Naive thymus-derived CD4-positive, alpha-beta T cell (primary cell): ENCODE measurements at regions of chr10 and their contacts with region 1.

Region 1: DNA sequence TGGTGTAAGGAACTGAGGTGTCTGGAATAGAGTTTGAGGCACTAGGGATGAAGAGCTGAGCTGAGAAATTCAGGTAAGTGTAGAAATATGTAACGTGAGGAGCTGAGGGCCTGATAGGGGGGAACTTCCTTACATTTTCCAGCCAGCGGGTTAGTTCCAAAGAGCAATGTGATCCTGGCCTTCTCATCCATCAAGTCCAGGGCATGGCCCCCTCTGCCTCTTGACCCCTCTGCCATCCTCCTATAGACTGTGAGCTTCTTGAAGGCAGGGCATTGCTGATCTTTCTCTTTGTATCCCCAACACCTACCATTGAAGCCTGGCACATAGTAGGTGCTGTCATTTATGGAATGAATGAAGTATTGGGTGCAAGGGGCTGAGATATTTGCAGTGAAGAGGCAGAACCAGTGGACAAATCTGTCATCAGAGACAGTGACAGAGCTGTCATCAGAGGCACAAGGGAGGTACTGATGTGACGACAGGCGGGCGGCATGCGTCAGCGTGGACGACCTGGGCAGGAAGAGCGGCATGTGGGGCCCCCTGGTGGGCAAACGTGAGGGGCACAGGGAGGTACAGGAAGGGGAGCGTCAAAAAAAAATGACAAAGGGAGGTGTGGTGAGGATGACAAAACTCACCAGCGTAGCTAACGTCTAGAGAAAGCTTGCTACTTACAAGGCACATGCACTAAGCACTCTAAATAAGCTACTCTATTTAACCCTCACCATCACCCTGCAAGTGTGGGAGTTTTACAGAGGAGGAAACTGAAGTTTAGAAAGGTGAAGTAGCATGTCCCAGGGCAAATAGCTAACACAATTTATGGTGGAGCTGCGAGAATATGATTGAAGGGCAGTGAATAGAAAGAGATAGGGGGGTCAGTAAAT is 5.2 kb upstream of the CAMK2G start:
- DNase-seq: peak; percentile 91 to 98 (median 96)
- ATAC-seq: peak; percentile 97
- H3K4me3 ChIP-seq: no peak overlapping the region
- H3K4me3 Mint-ChIP-seq: peak overlapping the region in 5 of 10 donors; percentile 0 to 40 (median 1)
- H3K27ac ChIP-seq: peak overlapping the region; percentile 68
- H3K27ac Mint-ChIP-seq: peak overlapping the region; percentile 30 to 98 (median 89)
- H3K4me1 ChIP-seq: peaks cover 18 to 22% of the 10 kb centered on the region in 2 donors
- H3K4me1 Mint-ChIP-seq: peaks cover 14 to 51% (median 41%) of the 10 kb centered on the region in 7 donors
- H3K27me3 ChIP-seq: no peaks in the 10 kb centered on the region
- H3K27me3 Mint-ChIP-seq: peaks cover 0 to 5% (median 0%) of the 10 kb centered on the region in 5 donors

Region 2: DNA sequence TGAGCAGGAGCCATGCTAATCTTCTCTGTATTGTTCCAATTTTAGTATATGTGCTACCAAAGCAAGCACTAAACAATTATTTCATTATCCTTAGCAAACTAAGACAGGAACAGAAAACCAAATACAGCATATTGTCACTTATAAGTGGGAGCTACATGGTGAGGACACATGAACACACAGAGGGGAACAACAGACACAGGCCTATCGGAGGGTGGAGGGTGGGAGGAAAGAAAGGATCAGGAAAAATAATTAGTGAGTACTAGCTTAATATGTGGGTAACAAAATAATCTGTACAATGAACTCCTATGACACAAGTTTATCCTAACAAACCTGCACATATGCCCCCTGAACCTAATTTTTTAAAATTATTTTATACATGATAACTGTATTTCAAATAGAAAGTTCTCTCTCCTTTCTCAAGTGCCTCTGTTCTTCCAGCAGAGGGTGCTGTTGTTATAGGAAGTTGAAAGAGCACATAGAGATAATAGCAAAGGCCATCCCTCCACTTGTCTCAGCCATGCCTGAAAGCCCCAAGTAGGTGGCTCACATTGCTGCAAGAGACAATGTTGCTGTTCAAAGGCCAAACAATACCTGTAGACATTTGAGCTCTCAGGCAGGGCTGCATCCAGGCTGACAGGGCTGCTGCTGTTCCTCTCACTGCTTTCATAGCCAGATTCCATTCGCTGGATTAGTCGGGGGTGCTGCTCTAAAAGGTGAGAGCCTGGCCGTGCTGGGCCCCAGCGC is 350.3 kb before region 1 on chr10:
- CTCF ChIA-PET with region 1: no interaction called
- POLR2A ChIA-PET with region 1: no interaction called
- intact Hi-C with region 1: loop called in 1 of 2 experiments (anchors 10 kb)
- DNase-seq: peak in 8 of 9 donors; percentile 23 to 82 (median 73)
- ATAC-seq: peak; percentile 93
- H3K4me3 ChIP-seq: no peak overlapping the region
- H3K4me3 Mint-ChIP-seq: no peak overlapping the region
- H3K27ac ChIP-seq: no peak overlapping the region
- H3K27ac Mint-ChIP-seq: no peak overlapping the region
- H3K4me1 ChIP-seq: no peaks in the 10 kb centered on the region
- H3K4me1 Mint-ChIP-seq: no peaks in the 10 kb centered on the region
- H3K27me3 ChIP-seq: no peaks in the 10 kb centered on the region
- H3K27me3 Mint-ChIP-seq: peaks cover 0 to 2% (median 0%) of the 10 kb centered on the region in 5 donors

Region 3: DNA sequence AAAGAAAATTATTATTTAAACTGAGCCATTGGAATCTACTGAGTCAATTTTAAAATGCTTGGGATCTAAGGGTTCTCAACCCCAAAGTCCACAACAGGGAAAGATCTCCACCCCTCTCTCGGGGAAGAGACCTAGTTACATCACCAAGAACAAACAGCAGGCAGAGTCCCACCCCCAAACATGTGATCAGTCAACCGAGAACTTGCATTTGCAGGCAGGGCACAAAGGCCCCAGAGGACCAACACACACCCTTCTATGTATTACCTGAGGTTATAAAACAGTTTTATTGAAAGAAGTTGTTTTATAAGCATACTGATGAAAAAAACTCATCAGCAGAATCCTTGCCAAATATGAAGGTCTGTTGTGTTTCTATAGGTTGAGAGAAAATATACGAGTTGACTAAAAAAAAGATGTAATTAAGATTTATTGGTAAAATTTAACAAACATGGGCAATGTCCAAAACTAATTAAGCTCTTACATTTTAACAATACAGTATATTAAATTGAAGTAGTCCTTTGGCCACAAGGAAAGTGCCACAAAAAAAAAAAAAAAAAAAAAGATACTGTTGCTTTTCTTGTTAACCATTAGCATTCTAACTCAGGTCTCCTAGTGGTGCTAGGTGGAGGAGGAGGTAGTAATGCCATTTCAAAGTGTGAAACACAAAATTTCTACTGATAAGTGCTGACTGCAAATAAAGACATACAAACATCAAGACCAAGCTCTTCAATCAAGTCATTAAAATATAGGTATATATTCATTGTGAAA is 287.4 kb before region 1 on chr10:
- CTCF ChIA-PET with region 1: no interaction called
- POLR2A ChIA-PET with region 1: no interaction called
- intact Hi-C with region 1: no loop called
- DNase-seq: peak in 4 of 9 donors; percentile 6 to 28 (median 14)
- ATAC-seq: peak; percentile 66
- H3K4me3 ChIP-seq: no peak overlapping the region
- H3K4me3 Mint-ChIP-seq: peak overlapping the region; percentile 34 to 84 (median 70)
- H3K27ac ChIP-seq: peak overlapping the region; percentile 31
- H3K27ac Mint-ChIP-seq: peak overlapping the region; percentile 58 to 84 (median 78)
- H3K4me1 ChIP-seq: peaks cover 0 to 17% of the 10 kb centered on the region in 2 donors
- H3K4me1 Mint-ChIP-seq: peaks cover 12 to 32% (median 27%) of the 10 kb centered on the region in 7 donors
- H3K27me3 ChIP-seq: no peaks in the 10 kb centered on the region
- H3K27me3 Mint-ChIP-seq: no peaks in the 10 kb centered on the region

Region 4: DNA sequence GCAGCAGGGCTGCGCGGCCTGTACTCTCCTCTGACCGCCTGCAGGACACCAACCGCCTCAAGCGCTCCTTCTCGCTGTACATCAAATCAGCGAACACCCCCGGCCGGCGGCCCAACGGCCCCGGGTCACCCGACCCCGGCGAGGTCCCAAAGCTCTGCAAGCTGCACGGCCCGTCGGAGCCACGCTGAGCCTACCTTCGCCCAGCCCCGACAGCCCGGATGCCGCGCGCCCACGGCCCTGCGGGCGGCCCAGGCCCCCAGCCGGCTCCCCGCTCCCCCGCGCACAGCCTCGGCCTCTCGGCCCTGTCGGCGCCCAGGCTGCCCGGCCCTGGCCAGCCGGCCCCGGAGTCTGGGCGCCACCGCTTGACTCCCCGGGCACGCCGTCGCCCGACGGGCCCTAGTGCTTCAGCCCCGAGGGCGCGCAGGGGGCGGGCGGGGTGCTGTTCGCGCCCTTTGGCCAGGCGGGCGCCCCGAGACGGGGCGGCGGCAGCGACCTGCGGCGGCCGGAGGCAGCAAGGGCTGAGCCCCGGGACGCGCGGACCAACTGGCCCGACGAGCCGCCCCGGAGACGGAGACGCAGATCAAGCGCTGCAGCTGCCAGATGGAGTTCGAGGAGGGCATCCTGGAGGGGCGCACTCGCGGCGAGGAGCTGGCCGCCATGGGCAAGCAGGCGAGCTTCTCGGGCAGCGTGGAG is 146.5 kb before region 1 on chr10:
- CTCF ChIA-PET with region 1: no interaction called
- POLR2A ChIA-PET with region 1: no interaction called
- intact Hi-C with region 1: no loop called
- DNase-seq: no peak
- ATAC-seq: no peak
- H3K4me3 ChIP-seq: no peak overlapping the region
- H3K4me3 Mint-ChIP-seq: no peak overlapping the region
- H3K27ac ChIP-seq: no peak overlapping the region
- H3K27ac Mint-ChIP-seq: no peak overlapping the region
- H3K4me1 ChIP-seq: peaks cover 5 to 10% of the 10 kb centered on the region in 2 donors
- H3K4me1 Mint-ChIP-seq: peaks cover 0 to 31% (median 21%) of the 10 kb centered on the region in 7 donors
- H3K27me3 ChIP-seq: no peaks in the 10 kb centered on the region
- H3K27me3 Mint-ChIP-seq: no peaks in the 10 kb centered on the region

Region 5: DNA sequence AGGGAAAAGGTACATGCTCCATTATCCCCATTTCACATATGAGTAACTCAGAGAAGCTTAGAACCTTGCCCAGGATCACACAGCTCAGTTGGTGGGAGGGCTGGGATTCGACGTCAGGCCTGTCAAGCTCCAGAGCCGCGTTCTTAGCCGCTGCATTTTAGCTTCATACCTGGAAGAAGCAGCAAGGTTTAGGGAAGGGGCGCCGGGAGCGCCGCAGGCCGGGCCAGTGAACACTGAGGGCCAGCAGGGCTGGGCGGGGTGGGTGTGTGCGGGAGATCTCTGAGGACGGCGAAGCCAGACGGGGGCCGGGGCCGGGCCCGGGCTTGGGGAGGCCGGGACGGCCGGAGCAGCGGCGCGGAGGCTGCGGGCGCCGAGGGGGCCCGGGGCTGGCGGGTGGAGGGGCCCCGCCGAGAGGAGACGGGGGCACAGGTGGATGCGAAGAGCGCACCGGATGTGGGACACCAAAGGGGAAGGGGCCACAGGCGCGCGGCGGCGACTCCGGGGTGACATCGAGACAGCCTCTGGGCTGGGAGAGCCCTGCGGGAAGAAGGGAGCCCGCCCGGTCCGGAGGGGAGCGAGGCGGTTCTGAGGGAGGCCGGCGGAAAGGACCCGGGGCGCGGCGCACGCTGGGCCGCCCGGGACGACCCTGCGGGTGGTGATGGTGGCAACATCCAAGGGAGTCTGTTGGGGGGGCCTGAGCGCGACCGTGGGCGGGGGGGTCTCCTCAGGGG is 68.6 kb before region 1 on chr10:
- CTCF ChIA-PET with region 1: interaction called, 14 read pairs
- POLR2A ChIA-PET with region 1: interaction called, 4 read pairs
- intact Hi-C with region 1: loop called (anchors 1 kb)
- DNase-seq: peak; percentile 46 to 76 (median 71)
- ATAC-seq: peak; percentile 18
- H3K4me3 ChIP-seq: peak overlapping the region; percentile 69
- H3K4me3 Mint-ChIP-seq: peak overlapping the region; percentile 88 to 97 (median 94)
- H3K27ac ChIP-seq: peak overlapping the region; percentile 97
- H3K27ac Mint-ChIP-seq: peak overlapping the region; percentile 94 to 98 (median 96)
- H3K4me1 ChIP-seq: peaks cover 26 to 31% of the 10 kb centered on the region in 2 donors
- H3K4me1 Mint-ChIP-seq: peaks cover 31 to 54% (median 49%) of the 10 kb centered on the region in 7 donors
- H3K27me3 ChIP-seq: no peaks in the 10 kb centered on the region
- H3K27me3 Mint-ChIP-seq: no peaks in the 10 kb centered on the region

Region 6: GRCh38 chr10:73848821-73849489 is 30.6 kb before region 1 on chr10:
- CTCF ChIA-PET with region 1: interaction called, 288 read pairs
- POLR2A ChIA-PET with region 1: interaction called, 327 read pairs
- intact Hi-C with region 1: loop called (anchors 1 kb)
- DNase-seq: peak; percentile 82 to 93 (median 88)
- ATAC-seq: peak; percentile 100
- H3K4me3 ChIP-seq: no peak overlapping the region
- H3K4me3 Mint-ChIP-seq: peak overlapping the region in 5 of 10 donors; percentile 1 to 58 (median 37)
- H3K27ac ChIP-seq: peak overlapping the region; percentile 56
- H3K27ac Mint-ChIP-seq: peak overlapping the region; percentile 75 to 97 (median 94)
- H3K4me1 ChIP-seq: peaks cover 6 to 7% of the 10 kb centered on the region in 2 donors
- H3K4me1 Mint-ChIP-seq: peaks cover 11 to 23% (median 16%) of the 10 kb centered on the region in 7 donors
- H3K27me3 ChIP-seq: no peaks in the 10 kb centered on the region
- H3K27me3 Mint-ChIP-seq: no peaks in the 10 kb centered on the region

Region 7: GRCh38 chr10:73865459-73866442 is 13.8 kb before region 1 on chr10:
- CTCF ChIA-PET with region 1: interaction called, 86 read pairs
- POLR2A ChIA-PET with region 1: interaction called, 327 read pairs
- intact Hi-C with region 1: loop called (anchors 1 kb)
- DNase-seq: peak; percentile 18 to 50 (median 47)
- ATAC-seq: peak; percentile 90
- H3K4me3 ChIP-seq: peak overlapping the region; percentile 60
- H3K4me3 Mint-ChIP-seq: peak overlapping the region; percentile 79 to 92 (median 87)
- H3K27ac ChIP-seq: peak overlapping the region; percentile 67
- H3K27ac Mint-ChIP-seq: peak overlapping the region; percentile 88 to 97 (median 96)
- H3K4me1 ChIP-seq: peaks cover 28 to 72% of the 10 kb centered on the region in 2 donors
- H3K4me1 Mint-ChIP-seq: peaks cover 56 to 92% (median 88%) of the 10 kb centered on the region in 7 donors
- H3K27me3 ChIP-seq: no peaks in the 10 kb centered on the region
- H3K27me3 Mint-ChIP-seq: no peaks in the 10 kb centered on the region